Spleen (tissue), 13 donors: ENCODE measurements at regions of chr16 and their contacts with region 1.

Region 1: DNA sequence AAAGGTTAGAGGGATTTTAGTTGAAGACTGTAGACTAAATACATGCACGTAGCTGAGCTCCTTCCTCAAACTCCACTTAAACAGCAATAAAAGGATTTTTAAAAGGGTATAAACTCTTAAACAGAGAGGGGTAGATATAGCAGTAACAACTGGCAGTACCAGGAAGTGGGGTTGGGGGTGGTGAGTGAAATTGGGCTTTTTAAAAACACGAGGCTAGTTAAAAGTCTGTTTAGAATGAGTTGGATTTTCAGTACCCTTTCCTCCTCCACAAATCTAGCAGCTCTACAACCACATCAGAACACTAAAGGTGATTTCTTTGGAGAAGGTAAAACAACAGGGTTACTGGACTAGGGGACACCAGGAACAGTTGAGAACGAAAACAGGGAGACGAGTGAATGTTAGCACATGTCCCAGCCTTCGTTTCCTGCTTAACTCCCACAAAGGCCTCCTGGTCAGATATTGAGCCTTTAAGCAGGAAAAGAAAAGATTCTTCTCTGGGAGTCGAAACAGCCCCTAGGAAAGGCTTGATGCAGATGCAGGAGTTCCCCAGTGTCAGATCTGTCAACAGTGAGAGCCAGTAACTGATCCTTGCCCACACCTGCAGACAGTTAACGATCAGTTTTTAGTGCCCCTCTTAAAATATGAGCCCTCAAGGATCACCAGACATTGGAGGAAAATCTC is 13.8 kb downstream of the NETO2 start:
- DNase-seq: no peak
- H3K4me3 ChIP-seq: no peak overlapping the region
- H3K27ac ChIP-seq: no peak overlapping the region
- H3K4me1 ChIP-seq: peaks cover 0 to 16% (median 2%) of the 10 kb centered on the region in 6 donors
- H3K27me3 ChIP-seq: no peaks in the 10 kb centered on the region
- CTCF ChIP-seq: no peak
- POLR2A ChIP-seq: no peak

Region 2: DNA sequence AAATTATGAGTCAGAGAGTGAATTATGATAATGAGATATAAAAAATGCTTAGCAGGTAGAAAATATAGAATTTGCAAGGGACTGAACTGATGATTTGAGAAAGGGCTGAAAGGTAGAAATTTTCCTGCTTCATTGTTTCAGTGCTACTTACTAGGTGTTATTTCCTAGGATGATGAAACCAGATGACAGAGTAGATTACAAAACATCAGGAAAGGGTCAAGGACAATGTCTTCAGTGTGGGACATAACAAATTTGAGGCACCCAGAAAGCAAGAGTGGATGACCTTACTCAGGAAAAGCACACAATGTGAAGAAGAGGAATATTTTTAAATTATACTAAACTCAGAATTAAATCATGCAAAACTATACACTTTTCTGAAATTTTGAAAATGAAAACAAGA is 610.8 kb before region 1 on chr16:
- intact Hi-C with region 1: no loop called
- DNase-seq: no peak
- H3K4me3 ChIP-seq: no peak overlapping the region
- H3K27ac ChIP-seq: no peak overlapping the region
- H3K4me1 ChIP-seq: no peaks in the 10 kb centered on the region
- H3K27me3 ChIP-seq: no peaks in the 10 kb centered on the region
- CTCF ChIP-seq: no peak
- POLR2A ChIP-seq: no peak

Region 3: GRCh38 chr16:47058295-47059086 is 71.4 kb before region 1 on chr16:
- intact Hi-C with region 1: loop called (anchors 10 kb)
- DNase-seq: peak; percentile 56
- H3K4me3 ChIP-seq: no peak overlapping the region
- H3K27ac ChIP-seq: peak overlapping the region in 6 of 8 donors; percentile 36 to 59 (median 52)
- H3K4me1 ChIP-seq: peaks cover 0 to 6% (median 0%) of the 10 kb centered on the region in 6 donors
- H3K27me3 ChIP-seq: no peaks in the 10 kb centered on the region
- CTCF ChIP-seq: no peak
- POLR2A ChIP-seq: no peak

Region 4: GRCh38 chr16:47084198-47084597 is 45.7 kb before region 1 on chr16:
- intact Hi-C with region 1: no loop called
- DNase-seq: no peak
- H3K4me3 ChIP-seq: no peak overlapping the region
- H3K27ac ChIP-seq: no peak overlapping the region
- H3K4me1 ChIP-seq: no peaks in the 10 kb centered on the region
- H3K27me3 ChIP-seq: no peaks in the 10 kb centered on the region
- CTCF ChIP-seq: no peak
- POLR2A ChIP-seq: no peak

Region 5: DNA sequence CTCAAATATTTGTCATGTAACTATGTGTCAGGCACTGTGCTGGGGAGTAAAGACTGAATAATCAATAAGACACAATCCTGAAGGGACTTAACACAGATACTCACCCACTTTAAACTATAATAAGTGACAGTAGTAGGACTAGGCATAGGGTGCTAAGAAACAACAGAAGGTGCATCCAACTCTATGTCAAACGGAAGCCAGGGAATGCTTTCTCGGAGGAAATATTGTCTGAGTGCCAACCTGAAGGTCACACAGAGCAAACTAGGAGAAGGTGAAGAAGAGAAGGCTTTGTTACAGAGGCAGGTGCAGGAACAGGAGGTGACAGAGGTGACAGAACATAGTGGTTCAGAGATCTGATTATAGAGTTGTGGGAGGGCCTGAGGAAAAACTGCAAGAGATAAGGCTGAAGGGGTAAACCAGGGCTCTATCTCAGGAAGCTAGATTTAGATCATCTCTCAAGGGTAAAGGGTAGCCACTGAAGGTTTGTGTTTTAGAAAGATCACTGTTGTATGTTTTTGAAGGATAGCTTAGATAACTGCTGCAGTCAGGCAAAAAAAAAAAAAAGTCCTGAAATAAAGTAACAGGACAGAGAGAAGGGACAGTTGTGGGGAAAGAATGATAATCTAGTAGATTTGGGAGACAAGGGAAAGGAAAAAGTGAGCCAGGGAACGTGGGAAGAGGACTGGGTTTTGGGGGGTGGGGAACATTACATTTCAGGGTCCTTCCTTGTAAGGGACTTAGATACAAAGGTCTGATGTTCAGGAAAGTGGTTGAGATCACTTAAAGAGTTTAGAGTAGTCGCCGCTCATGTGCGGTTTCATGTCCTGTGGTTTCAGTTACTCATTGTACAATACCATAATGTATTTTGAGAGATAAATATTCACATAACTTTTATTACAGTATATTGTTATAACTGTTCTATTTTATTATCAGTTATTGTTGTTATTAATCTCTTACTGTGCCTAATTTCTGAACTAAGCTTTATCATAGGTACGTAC is 99.5 kb after region 1 on chr16:
- intact Hi-C with region 1: no loop called
- DNase-seq: no peak
- H3K4me3 ChIP-seq: no peak overlapping the region
- H3K27ac ChIP-seq: no peak overlapping the region
- H3K4me1 ChIP-seq: no peaks in the 10 kb centered on the region
- H3K27me3 ChIP-seq: no peaks in the 10 kb centered on the region
- CTCF ChIP-seq: no peak
- POLR2A ChIP-seq: no peak